Activated CD4-positive, alpha-beta memory T cell treated with anti-CD3 and anti-CD28 coated beads for 36 hours (primary cell): ENCODE measurements at regions of chr10 and their contacts with region 1.

Region 1: DNA sequence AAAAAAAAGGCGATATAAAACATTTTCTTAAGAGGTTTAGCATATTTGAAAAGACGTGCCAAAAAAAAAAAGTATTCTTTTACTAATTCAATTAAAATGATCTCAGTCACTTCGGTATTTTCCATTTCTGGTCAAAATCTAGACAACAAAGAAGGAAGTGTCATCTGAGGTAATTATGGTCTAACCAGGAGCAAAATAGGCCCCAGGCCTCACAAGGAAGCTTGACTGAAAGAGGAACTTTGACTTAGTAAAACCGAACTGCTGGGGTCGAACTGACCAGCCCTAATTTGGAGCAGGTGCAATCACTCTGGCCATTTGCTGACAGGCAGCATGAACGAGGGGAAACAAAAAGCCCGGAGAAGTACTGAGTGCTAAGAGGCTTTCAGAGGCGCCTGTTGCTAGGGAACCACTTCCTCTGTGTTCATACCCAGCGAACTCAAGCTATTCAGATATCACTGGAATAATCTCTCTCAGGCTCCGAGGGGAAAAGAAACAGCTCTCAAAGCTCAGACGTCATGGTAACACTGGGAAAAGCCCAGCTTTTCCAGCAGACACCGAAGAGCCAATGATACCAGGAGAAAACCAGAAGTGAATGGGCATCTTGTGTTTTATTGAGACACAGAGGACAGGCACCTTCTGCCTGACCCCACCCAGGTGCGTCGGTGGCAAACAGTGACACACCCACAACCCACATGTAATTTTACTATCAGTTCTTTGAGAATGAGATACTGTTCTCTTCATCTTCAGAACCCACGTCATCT is 126.5 kb downstream of the FAM107B start:
- DNase-seq: peak; percentile 81
- H3K4me3 Mint-ChIP-seq: peak overlapping the region; percentile 75
- H3K27ac Mint-ChIP-seq: peak overlapping the region; percentile 98
- H3K4me1 Mint-ChIP-seq: peaks cover 77% of the 10 kb centered on the region
- H3K27me3 Mint-ChIP-seq: no peaks in the 10 kb centered on the region

Region 2: GRCh38 chr10:14507176-14507575 is 141.0 kb before region 1 on chr10:
- CTCF ChIA-PET with region 1: no interaction called
- POLR2A ChIA-PET with region 1: interaction called, 3 read pairs
- intact Hi-C with region 1: loop called (anchors 2 kb)
- DNase-seq: peak; percentile 72
- H3K4me3 Mint-ChIP-seq: no peak overlapping the region
- H3K27ac Mint-ChIP-seq: peak overlapping the region; percentile 53
- H3K4me1 Mint-ChIP-seq: peaks cover 37% of the 10 kb centered on the region
- H3K27me3 Mint-ChIP-seq: no peaks in the 10 kb centered on the region

Region 3: GRCh38 chr10:14588084-14588937 is 59.9 kb before region 1 on chr10:
- CTCF ChIA-PET with region 1: interaction called, 4 read pairs
- POLR2A ChIA-PET with region 1: interaction called, 3 read pairs
- intact Hi-C with region 1: loop called (anchors 1 kb)
- DNase-seq: peak; percentile 82
- H3K4me3 Mint-ChIP-seq: peak overlapping the region; percentile 52
- H3K27ac Mint-ChIP-seq: peak overlapping the region; percentile 98
- H3K4me1 Mint-ChIP-seq: peaks cover 90% of the 10 kb centered on the region
- H3K27me3 Mint-ChIP-seq: no peaks in the 10 kb centered on the region

Region 4: DNA sequence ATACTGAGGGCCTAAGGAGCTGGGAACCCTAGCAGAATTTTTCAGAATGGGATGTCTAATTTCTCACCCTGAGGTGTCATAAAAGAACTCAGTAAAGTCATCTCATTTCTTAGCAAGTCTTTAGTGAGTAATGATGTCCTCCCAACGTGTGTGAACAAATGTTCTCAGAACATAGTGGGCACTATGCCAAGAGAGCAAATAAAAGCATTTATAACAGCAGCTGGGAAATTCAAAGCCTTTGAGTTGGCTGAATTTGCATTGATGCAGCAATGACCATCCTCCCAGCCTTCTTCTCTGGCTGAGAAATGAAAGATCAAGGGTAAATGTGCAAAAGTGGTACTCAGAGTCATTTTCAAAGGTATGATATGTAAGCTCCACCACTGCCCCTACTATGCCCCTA is 17.1 kb after region 1 on chr10:
- CTCF ChIA-PET with region 1: interaction called, 3 read pairs
- POLR2A ChIA-PET with region 1: interaction called, 12 read pairs
- intact Hi-C with region 1: loop called (anchors 1 kb)
- DNase-seq: peak; percentile 40
- H3K4me3 Mint-ChIP-seq: no peak overlapping the region
- H3K27ac Mint-ChIP-seq: peak overlapping the region; percentile 56
- H3K4me1 Mint-ChIP-seq: peaks cover 45% of the 10 kb centered on the region
- H3K27me3 Mint-ChIP-seq: no peaks in the 10 kb centered on the region

Region 5: GRCh38 chr10:14736600-14737081 is 88.5 kb after region 1 on chr10:
- CTCF ChIA-PET with region 1: no interaction called
- POLR2A ChIA-PET with region 1: no interaction called
- intact Hi-C with region 1: no loop called
- DNase-seq: no peak
- H3K4me3 Mint-ChIP-seq: no peak overlapping the region
- H3K27ac Mint-ChIP-seq: no peak overlapping the region
- H3K4me1 Mint-ChIP-seq: no peaks in the 10 kb centered on the region
- H3K27me3 Mint-ChIP-seq: no peaks in the 10 kb centered on the region

Region 6: DNA sequence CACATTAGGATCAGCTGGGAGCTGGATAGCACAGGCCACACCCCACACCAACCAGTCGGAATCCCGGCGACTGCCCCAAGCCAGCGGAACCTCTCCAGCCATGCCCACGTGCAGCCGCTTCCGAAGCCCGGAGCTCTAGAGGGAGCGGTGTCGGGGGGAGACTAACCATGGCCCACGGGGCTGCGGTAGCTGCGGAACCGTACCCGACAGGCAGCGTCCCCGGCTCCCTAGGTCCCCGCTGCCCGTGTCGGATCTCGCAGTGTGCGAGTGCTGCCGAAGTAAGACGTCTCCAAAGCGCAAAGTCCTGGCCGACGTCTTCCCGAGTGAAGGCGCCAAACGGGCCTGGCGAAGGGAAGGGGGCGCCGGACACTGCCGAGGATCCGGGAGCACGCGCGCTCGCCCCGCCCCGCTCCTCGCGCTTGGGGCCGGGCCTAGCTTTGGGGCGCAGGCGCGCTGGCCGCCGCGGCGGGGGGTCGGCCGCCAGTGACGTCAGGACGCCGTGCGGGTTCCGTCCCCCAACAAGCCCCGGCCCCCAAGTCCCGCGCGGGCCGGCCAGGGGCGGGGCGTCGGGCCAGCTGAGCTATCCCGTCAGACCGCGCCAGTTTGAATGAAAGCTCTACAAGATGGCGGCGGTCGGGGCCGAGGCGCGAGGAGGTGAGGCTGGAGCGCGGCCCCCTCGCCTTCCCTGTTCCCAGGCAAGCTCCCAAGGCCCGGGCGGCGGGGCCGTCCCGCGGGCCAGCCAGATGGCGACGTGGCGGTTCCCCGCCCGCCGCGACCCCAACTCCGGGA is 230.3 kb after region 1 on chr10 and contains the start of gene SUV39H2:
- CTCF ChIA-PET with region 1: interaction called, 5 read pairs
- POLR2A ChIA-PET with region 1: no interaction called
- intact Hi-C with region 1: loop called (anchors 5 kb)
- DNase-seq: peak; percentile 96
- H3K4me3 Mint-ChIP-seq: peak within 1 kb of the TSS; percentile 94
- H3K27ac Mint-ChIP-seq: peak within 1 kb of the TSS; percentile 80
- H3K4me1 Mint-ChIP-seq: peaks cover 41% of the 10 kb centered on the region
- H3K27me3 Mint-ChIP-seq: no peaks in the 10 kb centered on the region
- total RNA-seq, gene SUV39H2: 38.7 to 39.8 TPM